Activated naive CD8-positive, alpha-beta T cell treated with anti-CD3 and anti-CD28 coated beads, Interleukin-2, amount 10 ng/mL, durations not matched to agents 7 days and 5 days (primary cell): ENCODE measurements at regions of chr21 and their contacts with region 1.

Region 1: DNA sequence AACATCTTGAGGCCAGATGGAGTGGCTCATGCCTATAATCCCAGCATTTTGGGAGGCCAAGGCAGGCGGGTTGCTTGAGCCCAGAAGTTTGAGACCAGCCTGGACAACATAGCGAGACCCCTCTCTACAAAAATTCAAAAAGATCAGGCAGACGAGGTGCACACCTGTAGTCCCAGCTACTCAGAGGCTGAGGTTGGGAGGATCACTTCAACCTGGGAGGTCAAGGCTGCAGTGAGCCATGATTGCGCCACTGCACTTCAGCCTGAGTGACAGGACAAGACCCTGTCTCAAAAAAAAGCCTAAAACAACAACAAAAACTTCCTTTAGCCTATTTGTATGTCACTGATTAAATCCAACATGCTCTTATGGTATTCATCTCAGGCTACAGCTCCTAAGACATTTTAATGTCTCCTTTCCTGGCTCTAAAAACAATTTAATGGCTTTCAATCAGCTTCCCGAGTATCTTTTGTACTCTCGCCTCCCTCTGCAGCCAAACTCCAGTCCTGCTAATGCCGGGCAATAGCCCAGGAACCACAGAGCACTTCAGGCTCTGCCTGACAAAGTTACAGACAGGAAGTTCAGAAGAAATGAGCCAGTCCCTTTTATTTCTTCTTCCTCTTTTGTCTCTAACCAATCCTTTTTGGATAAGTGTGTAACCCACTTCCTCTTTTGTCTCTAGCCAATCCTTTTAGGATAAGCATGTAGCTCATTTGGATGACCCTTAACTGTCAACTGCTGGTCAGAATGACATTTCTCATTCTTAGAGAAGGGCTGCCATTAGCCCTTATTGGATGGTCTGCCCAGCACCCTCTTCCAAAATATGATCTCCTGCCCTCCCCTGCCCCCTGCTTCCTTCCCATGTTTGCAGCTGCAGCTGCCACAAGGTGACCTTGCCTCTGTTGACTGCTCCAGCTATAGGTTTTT is 6.6 kb upstream of the DOP1B start:
- DNase-seq: no peak
- ATAC-seq: peak; percentile 50
- H3K4me3 Mint-ChIP-seq: peak overlapping the region; percentile 71
- H3K27ac Mint-ChIP-seq: peak overlapping the region; percentile 89
- H3K4me1 Mint-ChIP-seq: peaks cover 41% of the 10 kb centered on the region
- H3K27me3 Mint-ChIP-seq: no peaks in the 10 kb centered on the region

Region 2: DNA sequence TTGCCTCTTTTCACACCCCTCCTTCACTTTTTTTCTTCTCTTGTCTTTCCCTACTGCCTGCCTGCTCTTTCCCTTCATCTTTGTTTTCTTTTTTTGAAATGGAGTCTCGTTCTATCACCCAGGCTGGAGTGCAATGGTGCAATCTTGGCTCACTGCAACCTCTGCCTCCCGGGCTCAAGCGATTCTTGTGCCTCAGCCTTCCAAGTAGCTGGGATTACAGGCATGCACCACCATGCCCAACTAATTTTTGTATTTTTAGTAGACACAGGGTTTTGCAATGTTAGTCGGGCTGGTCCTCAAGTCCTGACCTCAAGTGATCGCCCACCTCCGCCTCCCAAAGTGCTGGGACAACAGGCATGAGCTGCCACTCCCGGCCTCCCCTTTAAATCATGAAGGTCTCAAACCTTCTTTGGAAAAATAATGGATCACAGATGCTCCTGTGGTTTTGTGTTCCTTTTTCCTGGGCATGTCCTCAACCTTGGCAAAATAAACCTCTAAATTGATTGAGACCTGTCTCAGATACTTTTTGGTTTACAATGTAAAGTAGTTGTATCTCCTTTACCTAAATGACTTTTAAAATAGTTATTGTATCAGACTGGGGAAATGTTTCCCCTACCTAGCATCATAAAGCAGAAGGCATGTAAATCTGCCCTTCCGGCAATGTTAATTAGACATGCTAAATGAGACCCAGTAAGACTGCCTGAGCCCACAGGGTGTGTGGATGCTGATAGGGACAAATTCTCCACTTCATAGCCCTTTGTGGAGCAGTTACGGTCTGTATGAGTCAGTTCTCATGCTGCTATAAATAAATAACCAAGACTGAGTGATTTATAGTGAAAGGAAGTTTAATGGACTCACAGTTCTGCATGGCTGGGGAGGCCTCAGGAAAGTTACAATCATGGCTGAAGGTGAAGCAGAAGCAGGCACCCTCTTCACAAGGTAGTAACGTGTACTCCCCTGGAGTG is 52.5 kb before region 1 on chr21:
- POLR2A ChIA-PET with region 1: no interaction called
- DNase-seq: no peak
- ATAC-seq: no peak
- H3K4me3 Mint-ChIP-seq: no peak overlapping the region
- H3K27ac Mint-ChIP-seq: no peak overlapping the region
- H3K4me1 Mint-ChIP-seq: peaks cover 2% of the 10 kb centered on the region
- H3K27me3 Mint-ChIP-seq: peaks cover 3% of the 10 kb centered on the region

Region 3: DNA sequence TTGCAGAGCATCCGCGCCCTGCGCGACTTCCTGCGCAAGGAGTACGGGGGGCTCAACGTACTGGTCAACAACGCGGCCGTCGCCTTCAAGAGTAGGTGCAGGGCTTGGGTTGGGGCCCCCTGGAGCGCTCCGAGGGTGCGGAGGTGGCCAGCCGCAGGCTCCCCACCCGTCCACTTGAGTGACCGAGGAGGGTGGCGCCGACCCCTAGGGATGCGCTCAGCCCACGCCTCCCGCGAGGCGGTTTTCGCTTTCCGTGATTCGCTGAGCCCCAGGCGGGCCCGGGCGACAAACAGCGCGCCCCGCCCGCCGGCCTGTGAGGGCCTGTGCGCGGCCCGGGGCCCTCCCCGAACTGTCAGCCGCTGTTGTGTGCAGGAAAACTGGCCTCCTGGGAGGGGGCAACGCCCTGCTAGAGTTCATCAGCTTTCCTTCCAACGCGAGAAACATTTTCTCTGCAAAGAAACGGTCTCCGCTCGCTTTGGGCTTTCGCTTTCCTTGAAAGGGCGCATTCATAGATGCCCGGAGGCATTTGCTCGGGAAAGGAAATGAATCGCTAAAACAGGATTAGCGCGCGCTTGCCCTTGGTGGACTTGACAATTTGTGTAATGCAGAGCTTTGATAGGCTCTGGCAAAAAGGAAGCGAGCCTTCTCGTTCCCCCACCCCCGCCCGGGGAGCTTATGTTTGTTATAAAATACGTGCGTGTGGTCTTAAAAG is 14.5 kb before region 1 on chr21:
- POLR2A ChIA-PET with region 1: interaction called, 31 read pairs
- DNase-seq: peak; percentile 84
- ATAC-seq: peak; percentile 92
- H3K4me3 Mint-ChIP-seq: peak overlapping the region; percentile 94
- H3K27ac Mint-ChIP-seq: peak overlapping the region; percentile 91
- H3K4me1 Mint-ChIP-seq: peaks cover 25% of the 10 kb centered on the region
- H3K27me3 Mint-ChIP-seq: peaks cover 2% of the 10 kb centered on the region